Activated CD4-positive, alpha-beta T cell treated with anti-CD3 and anti-CD28 coated beads for 36 hours (primary cell): ENCODE measurements at regions of chr11 and their contacts with region 1.

Region 1: DNA sequence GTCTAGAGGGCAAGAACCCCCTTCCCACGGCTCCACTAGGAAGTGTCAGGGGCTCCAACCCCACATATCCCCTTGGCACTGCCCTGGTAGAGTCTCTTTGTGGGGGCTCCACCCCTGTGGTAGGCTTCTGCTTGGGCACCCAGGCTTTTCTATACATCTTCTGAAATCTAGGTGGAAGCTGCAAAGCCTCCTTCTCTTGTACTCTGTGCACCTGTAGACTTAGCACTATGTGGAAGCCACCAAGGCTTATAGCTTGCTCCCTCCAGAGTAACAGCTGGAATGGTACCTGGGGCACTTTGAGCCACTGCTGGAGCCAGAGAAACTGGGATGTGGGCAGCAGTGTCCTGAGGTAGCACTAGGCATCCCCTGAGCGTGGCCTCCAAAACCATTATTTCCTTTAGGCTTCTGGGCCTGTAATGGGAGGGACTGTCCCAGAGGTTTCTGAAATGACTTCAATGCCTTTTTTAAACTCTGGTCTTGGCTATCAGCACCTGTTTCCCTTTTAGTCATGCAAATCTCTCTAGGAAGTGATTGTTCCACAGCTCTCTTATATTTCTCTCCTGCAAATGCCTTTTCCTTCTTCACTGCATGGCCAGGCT is 68.4 kb downstream of the TRAF6 start:
- DNase-seq: peak; percentile 47
- ATAC-seq: peak; percentile 96
- H3K4me3 Mint-ChIP-seq: no peak overlapping the region
- H3K27ac Mint-ChIP-seq: no peak overlapping the region
- H3K4me1 Mint-ChIP-seq: peaks cover 15% of the 10 kb centered on the region
- H3K27me3 Mint-ChIP-seq: no peaks in the 10 kb centered on the region

Region 2: DNA sequence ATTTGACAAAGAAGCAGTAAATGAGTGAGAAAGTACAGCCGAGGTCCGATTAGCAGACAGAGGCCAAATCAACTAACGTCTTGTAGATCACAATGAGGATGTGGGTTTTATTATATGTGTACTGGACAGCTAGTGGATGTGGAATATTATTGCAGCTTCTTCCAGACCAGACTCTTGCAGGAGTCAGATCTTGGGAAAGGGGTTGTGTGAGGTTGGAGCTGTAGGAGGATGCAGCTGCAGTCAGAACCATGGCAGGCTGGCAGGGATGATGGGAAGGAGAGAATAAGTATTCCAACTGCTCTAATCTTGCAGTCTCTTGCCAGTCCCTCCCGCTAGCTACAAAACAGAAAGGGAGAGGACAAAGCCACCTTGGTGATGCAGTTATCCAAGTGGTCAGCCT is 544.7 kb before region 1 on chr11:
- CTCF ChIA-PET with region 1: no interaction called
- POLR2A ChIA-PET with region 1: no interaction called
- intact Hi-C with region 1: no loop called
- DNase-seq: no peak
- ATAC-seq: no peak
- H3K4me3 Mint-ChIP-seq: no peak overlapping the region
- H3K27ac Mint-ChIP-seq: no peak overlapping the region
- H3K4me1 Mint-ChIP-seq: no peaks in the 10 kb centered on the region
- H3K27me3 Mint-ChIP-seq: peaks cover 12% of the 10 kb centered on the region

Region 3: GRCh38 chr11:36385121-36385970 is 56.4 kb before region 1 on chr11:
- CTCF ChIA-PET with region 1: no interaction called
- POLR2A ChIA-PET with region 1: no interaction called
- intact Hi-C with region 1: loop called in 1 of 2 experiments (anchors 2 kb)
- DNase-seq: peak; percentile 32
- ATAC-seq: peak; percentile 66
- H3K4me3 Mint-ChIP-seq: no peak overlapping the region
- H3K27ac Mint-ChIP-seq: peak overlapping the region; percentile 67
- H3K4me1 Mint-ChIP-seq: peaks cover 24% of the 10 kb centered on the region
- H3K27me3 Mint-ChIP-seq: peaks cover 3% of the 10 kb centered on the region

Region 4: GRCh38 chr11:36421546-36422155 is 20.1 kb before region 1 on chr11:
- CTCF ChIA-PET with region 1: interaction called, 5 read pairs
- POLR2A ChIA-PET with region 1: no interaction called
- intact Hi-C with region 1: loop called in 1 of 2 experiments (anchors 1 kb)
- DNase-seq: no peak
- ATAC-seq: no peak
- H3K4me3 Mint-ChIP-seq: peak overlapping the region; percentile 41
- H3K27ac Mint-ChIP-seq: peak overlapping the region; percentile 94
- H3K4me1 Mint-ChIP-seq: peaks cover 54% of the 10 kb centered on the region
- H3K27me3 Mint-ChIP-seq: peaks cover 7% of the 10 kb centered on the region

Region 5: GRCh38 chr11:36469063-36469462 is 27.4 kb after region 1 on chr11:
- CTCF ChIA-PET with region 1: no interaction called
- POLR2A ChIA-PET with region 1: no interaction called
- intact Hi-C with region 1: loop called in 1 of 2 experiments (anchors 2 kb)
- DNase-seq: peak; percentile 63
- ATAC-seq: peak; percentile 25
- H3K4me3 Mint-ChIP-seq: no peak overlapping the region
- H3K27ac Mint-ChIP-seq: no peak overlapping the region
- H3K4me1 Mint-ChIP-seq: no peaks in the 10 kb centered on the region
- H3K27me3 Mint-ChIP-seq: no peaks in the 10 kb centered on the region